ENCODE measurements at regions of chr1 and their contacts with region 1.

Region 1: GRCh38 chr1:27752360-27752759 is 20.7 kb upstream of the STX12 start:
- DNase-seq: no peak
- ATAC-seq: no peak
- H3K4me3 ChIP-seq: no peak overlapping the region
- H3K27ac ChIP-seq: no peak overlapping the region
- H3K4me1 ChIP-seq: no peaks in the 10 kb centered on the region
- H3K27me3 ChIP-seq: no peaks in the 10 kb centered on the region
- CTCF ChIP-seq: no peak

Region 2: DNA sequence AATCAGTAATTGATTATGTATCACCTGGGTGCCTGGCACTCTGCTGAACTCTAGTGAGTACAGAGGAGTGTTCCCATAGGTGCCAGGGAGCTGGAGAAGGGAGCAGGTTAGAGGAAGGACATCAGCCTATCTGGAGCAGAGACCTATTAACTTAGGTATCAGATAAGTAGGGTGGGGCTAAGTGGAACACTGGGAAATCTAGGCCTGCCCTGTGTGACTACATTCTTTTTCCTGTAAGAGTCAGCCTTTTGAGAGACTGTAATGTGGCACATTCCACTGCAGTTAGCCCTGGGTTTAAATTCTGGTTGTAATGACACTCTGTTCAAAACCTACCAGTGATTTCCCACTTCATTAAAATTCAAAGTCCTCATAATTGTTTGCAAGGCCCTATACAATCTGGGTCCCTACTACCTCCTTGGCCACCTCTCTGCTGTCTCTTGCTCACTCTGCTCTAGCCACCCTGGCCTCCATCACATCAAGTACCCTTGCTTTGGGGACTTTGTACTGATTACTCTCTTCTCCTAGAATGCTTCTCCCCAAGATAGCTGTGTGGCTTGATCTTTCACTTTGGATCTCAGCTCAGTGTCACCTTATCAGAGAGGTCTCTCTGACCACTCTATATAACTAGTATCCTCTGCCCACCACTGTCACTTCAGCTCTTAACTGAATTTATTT is 33.6 kb after region 1 on chr1:
- CTCF ChIA-PET with region 1: no interaction called
- POLR2A ChIA-PET with region 1: no interaction called
- in situ Hi-C with region 1: no loop called
- intact Hi-C with region 1: no loop called
- DNase-seq: no peak
- ATAC-seq: no peak
- H3K4me3 ChIP-seq: no peak overlapping the region
- H3K27ac ChIP-seq: no peak overlapping the region
- H3K4me1 ChIP-seq: no peaks in the 10 kb centered on the region
- H3K27me3 ChIP-seq: no peaks in the 10 kb centered on the region
- CTCF ChIP-seq: no peak

Region 3: GRCh38 chr1:27928216-27928954 is 176.0 kb after region 1 on chr1:
- CTCF ChIA-PET with region 1: no interaction called
- POLR2A ChIA-PET with region 1: interaction called, 15 read pairs
- in situ Hi-C with region 1: no loop called
- intact Hi-C with region 1: no loop called
- DNase-seq: no peak
- ATAC-seq: no peak
- H3K4me3 ChIP-seq: no peak overlapping the region
- H3K27ac ChIP-seq: no peak overlapping the region
- H3K4me1 ChIP-seq: no peaks in the 10 kb centered on the region
- H3K27me3 ChIP-seq: no peaks in the 10 kb centered on the region
- CTCF ChIP-seq: no peak

Measured in Panc1 (cell line).